Activated naive CD4-positive, alpha-beta T cell treated with anti-CD3 and anti-CD28 coated beads for 36 hours (primary cell): ENCODE measurements at regions of chr14 and their contacts with region 1.

Region 1: GRCh38 chr14:39169541-39169900 is 612 bp downstream of the TRAPPC6B start:
- DNase-seq: no peak
- H3K4me3 Mint-ChIP-seq: peak overlapping the region; percentile 85
- H3K27ac Mint-ChIP-seq: peak overlapping the region; percentile 98
- H3K4me1 Mint-ChIP-seq: peaks cover 45% of the 10 kb centered on the region
- H3K27me3 Mint-ChIP-seq: no peaks in the 10 kb centered on the region

Region 2: GRCh38 chr14:38743966-38744584 is 425.4 kb before region 1 on chr14:
- CTCF ChIA-PET with region 1: no interaction called
- intact Hi-C with region 1: no loop called
- DNase-seq: no peak
- H3K4me3 Mint-ChIP-seq: no peak overlapping the region
- H3K27ac Mint-ChIP-seq: no peak overlapping the region
- H3K4me1 Mint-ChIP-seq: no peaks in the 10 kb centered on the region
- H3K27me3 Mint-ChIP-seq: no peaks in the 10 kb centered on the region

Region 3: GRCh38 chr14:39005044-39005880 is 164.3 kb before region 1 on chr14:
- CTCF ChIA-PET with region 1: no interaction called
- intact Hi-C with region 1: no loop called
- DNase-seq: no peak
- H3K4me3 Mint-ChIP-seq: no peak overlapping the region
- H3K27ac Mint-ChIP-seq: no peak overlapping the region
- H3K4me1 Mint-ChIP-seq: no peaks in the 10 kb centered on the region
- H3K27me3 Mint-ChIP-seq: no peaks in the 10 kb centered on the region

Region 4: GRCh38 chr14:39181026-39181692 is 11.6 kb after region 1 on chr14:
- CTCF ChIA-PET with region 1: no interaction called
- intact Hi-C with region 1: loop called (anchors 1 kb)
- DNase-seq: no peak
- H3K4me3 Mint-ChIP-seq: no peak overlapping the region
- H3K27ac Mint-ChIP-seq: no peak overlapping the region
- H3K4me1 Mint-ChIP-seq: peaks cover 32% of the 10 kb centered on the region
- H3K27me3 Mint-ChIP-seq: no peaks in the 10 kb centered on the region

Region 5: GRCh38 chr14:39203659-39204606 is 34.4 kb after region 1 on chr14:
- CTCF ChIA-PET with region 1: no interaction called
- intact Hi-C with region 1: no loop called
- DNase-seq: no peak
- H3K4me3 Mint-ChIP-seq: no peak overlapping the region
- H3K27ac Mint-ChIP-seq: no peak overlapping the region
- H3K4me1 Mint-ChIP-seq: peaks cover 19% of the 10 kb centered on the region
- H3K27me3 Mint-ChIP-seq: no peaks in the 10 kb centered on the region